ENCODE measurements at regions of chr15 and their contacts with region 1.

Region 1: DNA sequence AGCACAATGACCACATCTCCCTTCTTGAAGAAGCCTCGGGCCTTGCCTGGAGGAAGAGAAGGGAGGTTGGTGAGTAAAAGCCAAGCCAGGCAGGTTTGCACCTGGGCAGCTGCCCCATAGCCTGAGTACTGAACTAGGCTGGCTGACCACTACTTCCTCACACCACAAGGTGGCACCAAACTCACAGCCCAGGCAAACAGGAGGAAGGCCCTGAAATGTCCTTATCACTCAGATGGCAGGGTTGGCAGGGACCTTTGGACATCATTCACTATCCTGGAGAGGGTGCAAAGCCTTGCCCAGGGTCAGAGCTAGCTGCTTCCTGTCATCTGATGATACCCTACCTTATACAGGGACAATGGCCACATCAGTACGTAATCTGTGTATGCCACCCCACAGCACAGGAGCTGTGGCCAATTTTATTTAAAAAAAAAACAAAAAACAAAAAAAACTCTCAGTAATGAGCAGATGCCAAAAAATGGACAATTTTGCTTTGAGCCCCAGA is 2.2 kb upstream of the GRAMD2A start:
- DNase-seq: peak; percentile 86
- H3K4me3 Mint-ChIP-seq: no peak overlapping the region
- H3K27ac Mint-ChIP-seq: no peak overlapping the region
- H3K4me1 Mint-ChIP-seq: peaks cover 38% of the 10 kb centered on the region
- H3K27me3 Mint-ChIP-seq: no peaks in the 10 kb centered on the region
- CTCF ChIP-seq: peak; percentile 85

Region 2: DNA sequence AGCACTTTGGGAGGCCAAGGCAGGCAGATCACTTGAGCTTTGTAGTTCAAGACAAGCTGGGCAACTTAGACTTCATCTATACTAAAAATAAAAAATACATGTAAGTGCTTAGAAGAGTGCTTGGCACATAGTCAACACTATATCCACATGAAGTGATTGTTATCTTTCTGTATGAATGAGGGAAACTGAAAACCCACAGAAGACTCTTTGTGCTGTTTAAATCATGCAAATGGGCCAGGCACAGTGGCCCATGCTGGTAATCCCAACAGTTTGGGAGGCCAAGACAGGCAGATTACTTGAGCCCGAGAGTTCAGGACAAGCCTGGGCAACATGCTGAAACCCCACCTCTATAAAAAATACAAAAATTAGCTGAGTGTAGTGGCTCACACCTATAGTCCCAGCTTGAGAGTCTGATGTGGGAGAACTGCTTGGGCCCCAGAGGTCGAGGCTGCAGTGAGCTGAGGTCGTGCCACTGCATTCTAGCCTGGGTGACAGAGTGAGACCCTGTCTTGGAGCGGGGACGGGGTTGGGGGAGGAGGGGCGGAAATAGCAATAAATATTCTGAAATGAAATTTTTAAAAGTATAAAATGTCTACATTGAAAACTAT is 259.7 kb before region 1 on chr15:
- CTCF ChIA-PET with region 1: no interaction called
- POLR2A ChIA-PET with region 1: no interaction called
- intact Hi-C with region 1: no loop called
- DNase-seq: no peak
- H3K4me3 Mint-ChIP-seq: no peak overlapping the region
- H3K27ac Mint-ChIP-seq: no peak overlapping the region
- H3K4me1 Mint-ChIP-seq: no peaks in the 10 kb centered on the region
- H3K27me3 Mint-ChIP-seq: no peaks in the 10 kb centered on the region
- CTCF ChIP-seq: no peak

Region 3: GRCh38 chr15:72013703-72014102 is 186.1 kb before region 1 on chr15:
- CTCF ChIA-PET with region 1: no interaction called
- POLR2A ChIA-PET with region 1: no interaction called
- intact Hi-C with region 1: no loop called
- DNase-seq: no peak
- H3K4me3 Mint-ChIP-seq: no peak overlapping the region
- H3K27ac Mint-ChIP-seq: no peak overlapping the region
- H3K4me1 Mint-ChIP-seq: no peaks in the 10 kb centered on the region
- H3K27me3 Mint-ChIP-seq: no peaks in the 10 kb centered on the region
- CTCF ChIP-seq: no peak

Region 4: DNA sequence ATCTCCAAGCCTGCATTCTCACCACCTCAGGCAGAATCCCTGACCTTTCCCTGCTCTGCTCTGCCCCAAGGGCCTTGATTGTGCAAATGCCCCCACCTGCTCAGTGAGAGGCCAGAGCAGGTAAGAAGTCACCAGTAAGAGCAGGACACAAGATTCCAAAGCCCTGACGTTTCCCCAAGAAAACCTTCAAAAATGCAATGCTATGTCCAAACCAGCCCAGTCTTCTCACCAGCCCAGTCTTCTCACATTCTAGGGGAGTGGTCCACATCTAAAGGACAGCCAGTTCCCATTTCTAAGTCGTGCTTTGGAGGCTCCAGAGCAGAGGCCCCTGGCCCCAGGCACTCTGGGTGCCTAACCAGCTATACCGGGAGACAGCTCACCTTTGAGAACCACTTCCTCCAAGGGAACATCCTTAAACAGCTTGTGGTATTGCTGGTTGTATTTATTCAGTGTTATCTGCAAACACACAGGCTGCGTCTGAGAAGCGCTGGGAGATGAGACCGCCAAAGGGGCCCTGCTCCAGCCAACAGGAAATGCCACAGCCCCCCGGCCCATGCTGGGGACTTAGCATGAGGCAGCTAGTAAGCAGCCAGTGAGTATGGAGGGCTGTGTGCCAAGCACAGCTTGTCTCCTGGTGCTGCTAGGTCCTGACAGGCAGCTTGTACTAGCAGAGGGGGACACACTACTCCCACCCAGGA is 31.5 kb before region 1 on chr15:
- CTCF ChIA-PET with region 1: no interaction called
- POLR2A ChIA-PET with region 1: interaction called, 11 read pairs
- intact Hi-C with region 1: no loop called
- DNase-seq: peak; percentile 54
- H3K4me3 Mint-ChIP-seq: peak overlapping the region; percentile 46
- H3K27ac Mint-ChIP-seq: peak overlapping the region; percentile 95
- H3K4me1 Mint-ChIP-seq: peaks cover 22% of the 10 kb centered on the region
- H3K27me3 Mint-ChIP-seq: no peaks in the 10 kb centered on the region
- CTCF ChIP-seq: no peak

Region 5: DNA sequence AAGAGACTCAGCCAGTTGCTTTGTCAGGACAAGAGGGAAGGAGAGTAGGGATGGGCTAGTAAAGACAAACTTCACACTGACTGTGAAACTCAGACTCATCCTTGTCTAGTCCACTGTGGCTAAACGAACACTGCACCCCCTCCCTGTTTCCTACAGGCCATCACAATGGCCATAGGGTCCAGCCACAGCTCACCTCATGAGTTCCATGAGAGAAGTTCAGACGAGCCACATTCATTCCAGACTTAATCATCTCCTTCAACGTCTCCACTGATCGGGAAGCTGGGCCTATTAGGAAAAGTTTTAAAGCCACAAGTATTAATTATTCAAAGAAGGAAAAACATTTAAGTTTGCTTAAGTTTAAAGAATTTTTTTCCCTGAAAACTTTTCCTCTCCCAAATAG is 17.5 kb after region 1 on chr15:
- CTCF ChIA-PET with region 1: interaction called, 11 read pairs
- POLR2A ChIA-PET with region 1: interaction called, 139 read pairs
- intact Hi-C with region 1: loop called (anchors 2 kb)
- DNase-seq: no peak
- H3K4me3 Mint-ChIP-seq: no peak overlapping the region
- H3K27ac Mint-ChIP-seq: no peak overlapping the region
- H3K4me1 Mint-ChIP-seq: peaks cover 25% of the 10 kb centered on the region
- H3K27me3 Mint-ChIP-seq: no peaks in the 10 kb centered on the region
- CTCF ChIP-seq: no peak

Region 6: GRCh38 chr15:72237286-72238224 is 37.8 kb after region 1 on chr15:
- CTCF ChIA-PET with region 1: interaction called, 4 read pairs
- POLR2A ChIA-PET with region 1: interaction called, 424 read pairs
- intact Hi-C with region 1: no loop called
- DNase-seq: peak; percentile 99
- H3K4me3 Mint-ChIP-seq: peak overlapping the region; percentile 61
- H3K27ac Mint-ChIP-seq: peak overlapping the region; percentile 89
- H3K4me1 Mint-ChIP-seq: peaks cover 18% of the 10 kb centered on the region
- H3K27me3 Mint-ChIP-seq: no peaks in the 10 kb centered on the region
- CTCF ChIP-seq: no peak

Region 7: GRCh38 chr15:72285927-72286516 is 86.3 kb after region 1 on chr15:
- CTCF ChIA-PET with region 1: interaction called, 3 read pairs
- POLR2A ChIA-PET with region 1: interaction called, 4 read pairs
- intact Hi-C with region 1: loop called (anchors 1 kb)
- DNase-seq: peak; percentile 43
- H3K4me3 Mint-ChIP-seq: no peak overlapping the region
- H3K27ac Mint-ChIP-seq: no peak overlapping the region
- H3K4me1 Mint-ChIP-seq: no peaks in the 10 kb centered on the region
- H3K27me3 Mint-ChIP-seq: no peaks in the 10 kb centered on the region
- CTCF ChIP-seq: peak; percentile 56

Region 8: DNA sequence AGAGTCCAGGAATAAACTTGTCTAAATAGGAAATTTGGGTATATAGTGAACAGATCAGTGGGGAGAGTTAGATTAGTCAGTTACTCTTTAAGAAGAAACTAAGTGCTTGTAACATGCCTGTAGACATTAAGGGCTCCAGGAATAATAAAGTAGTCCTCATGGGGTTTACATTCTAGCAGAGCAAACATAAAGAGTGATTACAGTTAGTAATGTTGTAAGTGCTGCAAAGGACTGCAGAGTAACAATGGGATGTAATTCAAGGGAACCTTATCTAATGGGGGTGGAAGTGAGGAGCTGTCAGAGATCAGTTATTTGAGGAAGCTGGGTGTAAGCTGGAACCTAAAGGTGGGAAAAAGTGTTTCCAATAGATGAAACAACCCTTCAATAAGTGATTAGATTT is 341.9 kb after region 1 on chr15:
- CTCF ChIA-PET with region 1: no interaction called
- POLR2A ChIA-PET with region 1: no interaction called
- intact Hi-C with region 1: no loop called
- DNase-seq: no peak
- H3K4me3 Mint-ChIP-seq: no peak overlapping the region
- H3K27ac Mint-ChIP-seq: no peak overlapping the region
- H3K4me1 Mint-ChIP-seq: peaks cover 10% of the 10 kb centered on the region
- H3K27me3 Mint-ChIP-seq: no peaks in the 10 kb centered on the region
- CTCF ChIP-seq: no peak